ENCODE measurements at regions of chr10 and their contacts with region 1.

Region 1: GRCh38 chr10:85671530-85671929 is 695.1 kb downstream of the GRID1 start:
- DNase-seq: no peak
- ATAC-seq: peak; percentile 84
- H3K4me3 Mint-ChIP-seq: no peak overlapping the region
- H3K27ac Mint-ChIP-seq: no peak overlapping the region
- H3K4me1 Mint-ChIP-seq: peaks cover 14% of the 10 kb centered on the region
- H3K27me3 Mint-ChIP-seq: peaks cover 4% of the 10 kb centered on the region

Region 2: DNA sequence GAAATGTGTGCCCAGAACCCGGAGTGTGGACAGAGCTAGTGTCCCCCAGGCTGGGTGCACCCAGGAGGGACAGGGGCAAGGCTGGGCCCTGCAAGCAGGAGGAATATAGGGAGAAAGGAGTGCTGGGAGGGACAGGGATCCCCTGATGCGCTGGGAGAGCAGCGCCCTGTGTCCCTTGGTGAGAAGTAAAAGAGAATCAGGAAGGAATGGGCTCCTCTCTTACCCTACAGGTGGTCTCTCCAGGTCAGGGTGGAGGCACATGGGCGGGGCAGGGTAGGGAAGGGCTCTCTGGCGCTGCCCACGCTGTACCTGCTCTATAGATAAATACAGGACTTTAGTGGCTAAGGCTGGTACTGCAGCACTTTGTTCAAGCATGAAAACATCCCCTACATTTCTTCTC is 58.7 kb before region 1 on chr10:
- CTCF ChIA-PET with region 1: no interaction called
- POLR2A ChIA-PET with region 1: no interaction called
- intact Hi-C with region 1: loop called in 1 of 2 experiments (anchors 2 kb)
- DNase-seq: peak; percentile 37
- ATAC-seq: peak; percentile 74
- H3K4me3 Mint-ChIP-seq: no peak overlapping the region
- H3K27ac Mint-ChIP-seq: no peak overlapping the region
- H3K4me1 Mint-ChIP-seq: peaks cover 52% of the 10 kb centered on the region
- H3K27me3 Mint-ChIP-seq: no peaks in the 10 kb centered on the region

Measured in activated CD4-positive, alpha-beta T cell treated with anti-CD3 and anti-CD28 coated beads for 36 hours (primary cell).